ENCODE measurements at regions of chr15 and their contacts with region 1.

Region 1: DNA sequence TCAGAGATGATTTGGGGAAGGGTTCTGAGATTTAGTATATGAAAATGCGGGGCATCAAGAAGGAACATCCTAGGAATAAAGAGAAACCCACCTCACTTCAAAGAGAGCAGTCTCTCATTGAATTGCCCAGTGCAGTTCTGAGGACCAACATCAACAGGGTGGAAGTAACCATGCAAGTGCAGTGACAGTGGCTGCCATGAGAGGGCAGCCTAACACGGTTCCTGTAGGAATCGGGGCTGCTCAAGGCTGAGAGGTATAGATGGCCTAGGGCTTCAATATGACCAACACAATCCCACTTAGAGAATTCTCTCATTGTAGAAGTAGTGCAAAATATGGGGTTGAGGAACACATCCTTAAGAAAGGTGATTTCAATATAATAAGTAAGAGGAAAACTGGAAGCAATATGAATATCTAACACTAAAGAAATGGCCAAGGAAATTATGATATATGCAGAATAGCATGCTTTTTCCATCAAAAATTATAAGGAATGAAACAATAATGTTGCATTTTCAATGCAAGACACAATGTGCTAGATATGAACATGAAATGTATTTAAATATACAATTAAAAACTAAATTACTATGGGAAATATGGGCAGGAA is 51.1 kb upstream of the ARRDC4 start:
- DNase-seq: peak; percentile 55
- H3K4me3 Mint-ChIP-seq: no peak overlapping the region
- H3K27ac Mint-ChIP-seq: no peak overlapping the region
- H3K4me1 Mint-ChIP-seq: no peaks in the 10 kb centered on the region
- H3K27me3 Mint-ChIP-seq: peaks cover 8% of the 10 kb centered on the region

Region 2: DNA sequence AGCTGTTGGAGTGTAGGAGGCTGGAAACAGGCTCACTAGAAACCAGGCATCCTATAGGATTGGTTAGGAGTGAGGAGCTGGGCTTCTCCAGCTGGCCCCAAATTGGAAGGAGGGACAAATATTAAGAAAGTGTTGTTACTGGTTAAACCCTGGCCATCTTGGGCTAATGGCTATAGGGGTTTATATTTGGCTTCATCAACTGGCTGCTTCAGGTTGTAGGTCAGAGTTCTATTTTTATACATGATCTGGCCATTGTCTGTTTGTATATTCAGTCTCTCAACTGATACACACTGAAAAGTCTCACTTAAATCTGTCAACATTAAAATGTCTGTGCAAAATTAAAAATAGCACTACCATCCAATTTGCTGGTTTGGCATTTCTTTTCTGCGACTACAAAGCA is 19.1 kb before region 1 on chr15:
- CTCF ChIA-PET with region 1: no interaction called
- POLR2A ChIA-PET with region 1: no interaction called
- intact Hi-C with region 1: no loop called
- DNase-seq: no peak
- H3K4me3 Mint-ChIP-seq: no peak overlapping the region
- H3K27ac Mint-ChIP-seq: no peak overlapping the region
- H3K4me1 Mint-ChIP-seq: no peaks in the 10 kb centered on the region
- H3K27me3 Mint-ChIP-seq: no peaks in the 10 kb centered on the region

Region 3: GRCh38 chr15:97931314-97931713 is 21.9 kb after region 1 on chr15:
- CTCF ChIA-PET with region 1: no interaction called
- POLR2A ChIA-PET with region 1: no interaction called
- intact Hi-C with region 1: no loop called
- DNase-seq: no peak
- H3K4me3 Mint-ChIP-seq: no peak overlapping the region
- H3K27ac Mint-ChIP-seq: no peak overlapping the region
- H3K4me1 Mint-ChIP-seq: no peaks in the 10 kb centered on the region
- H3K27me3 Mint-ChIP-seq: no peaks in the 10 kb centered on the region

Region 4: DNA sequence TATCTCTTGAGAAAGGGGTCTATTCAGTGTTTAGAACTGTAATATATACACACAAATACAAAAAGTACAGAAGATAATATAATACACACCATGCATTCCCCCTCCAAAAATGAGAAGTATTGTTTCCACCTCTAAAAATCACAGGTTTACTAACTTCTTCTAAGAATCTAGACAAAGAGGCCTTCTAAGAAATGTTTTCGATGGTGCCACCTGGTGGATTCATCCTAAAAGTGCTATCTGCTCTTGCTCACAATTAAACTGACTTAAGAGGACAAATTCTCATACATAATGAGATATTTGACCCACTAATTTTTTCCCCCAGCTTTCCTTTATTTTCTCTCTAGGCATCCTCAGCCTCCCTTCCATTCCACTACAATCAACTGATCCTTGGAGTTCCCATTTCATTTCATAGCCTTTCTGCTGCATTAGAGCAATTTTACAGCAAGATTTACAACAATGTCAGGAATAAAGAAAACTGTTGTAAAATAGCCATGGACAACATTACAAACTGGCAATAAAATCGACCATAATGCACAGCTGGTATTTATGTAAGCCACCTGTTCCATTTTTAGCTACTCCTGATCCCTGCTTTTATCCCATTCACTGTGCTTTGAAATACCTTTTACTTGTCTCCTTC is 175.7 kb after region 1 on chr15:
- CTCF ChIA-PET with region 1: interaction called, 3 read pairs
- POLR2A ChIA-PET with region 1: no interaction called
- intact Hi-C with region 1: loop called (anchors 1 kb)
- DNase-seq: peak; percentile 14
- H3K4me3 Mint-ChIP-seq: no peak overlapping the region
- H3K27ac Mint-ChIP-seq: no peak overlapping the region
- H3K4me1 Mint-ChIP-seq: no peaks in the 10 kb centered on the region
- H3K27me3 Mint-ChIP-seq: no peaks in the 10 kb centered on the region

Region 5: GRCh38 chr15:98177924-98178592 is 268.7 kb after region 1 on chr15:
- CTCF ChIA-PET with region 1: interaction called, 8 read pairs
- POLR2A ChIA-PET with region 1: no interaction called
- intact Hi-C with region 1: loop called (anchors 1 kb)
- DNase-seq: peak; percentile 24
- H3K4me3 Mint-ChIP-seq: no peak overlapping the region
- H3K27ac Mint-ChIP-seq: no peak overlapping the region
- H3K4me1 Mint-ChIP-seq: peaks cover 2% of the 10 kb centered on the region
- H3K27me3 Mint-ChIP-seq: peaks cover 10% of the 10 kb centered on the region

Region 6: GRCh38 chr15:98292442-98293240 is 383.2 kb after region 1 on chr15:
- CTCF ChIA-PET with region 1: interaction called, 4 read pairs
- POLR2A ChIA-PET with region 1: no interaction called
- intact Hi-C with region 1: loop called (anchors 2 kb)
- DNase-seq: peak; percentile 56
- H3K4me3 Mint-ChIP-seq: no peak overlapping the region
- H3K27ac Mint-ChIP-seq: no peak overlapping the region
- H3K4me1 Mint-ChIP-seq: no peaks in the 10 kb centered on the region
- H3K27me3 Mint-ChIP-seq: peaks cover 3% of the 10 kb centered on the region

Region 7: DNA sequence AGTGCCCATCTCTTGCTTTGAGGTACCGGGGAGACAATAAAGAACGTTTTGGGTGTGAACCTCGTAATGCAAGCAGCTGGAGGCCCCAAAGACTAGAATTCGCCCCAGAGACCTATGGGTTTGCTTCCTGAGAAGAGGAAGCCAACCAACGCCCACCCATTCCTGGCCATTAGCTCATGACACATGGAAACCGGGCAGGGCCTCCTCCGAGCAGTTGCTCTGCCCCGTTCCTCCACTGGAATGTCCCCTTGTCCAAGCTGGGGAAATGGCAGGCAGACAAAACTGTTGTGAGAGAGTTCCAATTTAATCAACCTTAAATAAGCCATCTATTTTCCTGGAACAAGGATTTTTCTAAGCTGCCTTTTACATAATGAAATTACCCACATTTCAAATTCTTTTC is 488.0 kb after region 1 on chr15:
- CTCF ChIA-PET with region 1: no interaction called
- POLR2A ChIA-PET with region 1: no interaction called
- intact Hi-C with region 1: no loop called
- DNase-seq: no peak
- H3K4me3 Mint-ChIP-seq: no peak overlapping the region
- H3K27ac Mint-ChIP-seq: no peak overlapping the region
- H3K4me1 Mint-ChIP-seq: no peaks in the 10 kb centered on the region
- H3K27me3 Mint-ChIP-seq: peaks cover 6% of the 10 kb centered on the region